HepG2 (cell line): ENCODE measurements at regions of chr9 and their contacts with region 1.

Region 1: DNA sequence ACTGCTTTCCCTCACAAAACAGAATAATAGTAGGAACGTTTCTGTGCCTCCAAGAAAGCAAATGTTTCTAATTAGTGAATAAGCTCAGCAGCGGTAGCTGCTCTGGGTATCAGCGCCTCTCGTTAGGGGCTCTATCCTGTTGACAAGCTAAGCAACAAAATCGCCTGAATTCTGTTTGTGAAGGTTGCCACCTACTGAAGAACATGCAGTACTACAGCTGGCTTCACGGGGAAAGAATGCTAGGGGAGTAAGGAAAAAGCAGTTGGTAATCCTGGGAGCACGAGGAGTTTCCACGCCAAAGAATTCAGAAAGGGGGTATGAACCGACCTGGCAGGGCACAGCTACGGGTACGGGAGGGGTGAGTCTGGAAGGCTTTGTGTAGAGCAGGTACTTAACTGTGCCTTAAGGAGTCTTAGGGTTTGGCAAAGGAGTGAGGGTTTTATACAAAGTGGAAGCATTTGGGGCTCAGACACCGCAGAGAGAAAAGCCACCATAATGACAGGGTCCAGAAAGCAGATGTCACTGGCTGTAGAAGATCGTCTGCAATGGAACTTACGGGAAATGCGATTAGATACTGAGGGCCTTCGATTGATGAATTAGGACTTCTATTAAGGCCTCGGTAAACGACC is 171.7 kb downstream of the TTC39B start:
- DNase-seq: peak; percentile 73
- ATAC-seq: peak; percentile 93
- H3K4me3 ChIP-seq: peak overlapping the region in 2 of 3 experiments; percentile 36 to 60; a peak in 4 of 6 replicates
- H3K27ac ChIP-seq: no peak overlapping the region
- H3K4me1 ChIP-seq: peaks cover 25% of the 10 kb centered on the region; the same call in 1 of the 2 replicates
- H3K27me3 ChIP-seq: peaks cover 0 to 4% of the 10 kb centered on the region in 2 experiments; a peak in 1 of 5 replicates
- CTCF ChIP-seq: peak; percentile 92
- EP300 ChIP-seq: no peak
- POLR2A ChIP-seq: no peak
- RAD21 ChIP-seq: peak; percentile 83

Region 2: GRCh38 chr9:14961372-14962068 is 173.8 kb before region 1 on chr9:
- CTCF ChIA-PET with region 1: no interaction called
- POLR2A ChIA-PET with region 1: interaction called, 3 read pairs
- in situ Hi-C with region 1: no loop called
- intact Hi-C with region 1: loop called (anchors 5 kb)
- DNase-seq: peak; percentile 99
- ATAC-seq: peak; percentile 100
- H3K4me3 ChIP-seq: peak overlapping the region; percentile 58 to 76 (median 72)
- H3K27ac ChIP-seq: peak overlapping the region; percentile 100
- H3K4me1 ChIP-seq: peaks cover 40% of the 10 kb centered on the region
- H3K27me3 ChIP-seq: no peaks in the 10 kb centered on the region; a peak in 1 of 5 replicates
- CTCF ChIP-seq: peak; percentile 50
- EP300 ChIP-seq: no peak; a peak in 1 of 4 replicates
- POLR2A ChIP-seq: peak; percentile 86 to 89
- RAD21 ChIP-seq: no peak; the same call in 1 of the 2 replicates

Region 3: DNA sequence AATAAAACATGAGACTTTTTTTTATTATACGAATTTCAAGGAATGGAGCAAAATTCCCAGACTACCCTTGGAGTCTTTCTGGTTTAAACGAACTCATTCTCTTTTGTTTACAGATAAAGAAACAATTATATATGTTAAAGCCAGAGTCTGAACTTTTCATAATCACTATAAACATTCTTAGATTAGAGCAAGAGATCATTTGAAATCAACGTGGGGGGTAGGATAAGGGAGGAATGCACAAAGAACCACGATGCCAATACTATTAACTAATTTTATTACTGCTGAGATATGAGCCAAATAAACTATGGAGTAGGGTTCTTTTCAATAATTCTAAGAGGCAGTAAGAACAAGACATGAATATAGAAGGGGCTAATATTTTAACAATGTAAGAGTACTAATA is 77.0 kb before region 1 on chr9:
- CTCF ChIA-PET with region 1: no interaction called
- POLR2A ChIA-PET with region 1: no interaction called
- in situ Hi-C with region 1: no loop called
- intact Hi-C with region 1: loop called (anchors 2 kb)
- DNase-seq: no peak
- ATAC-seq: no peak
- H3K4me3 ChIP-seq: no peak overlapping the region
- H3K27ac ChIP-seq: no peak overlapping the region
- H3K4me1 ChIP-seq: no peaks in the 10 kb centered on the region
- H3K27me3 ChIP-seq: peaks cover 0 to 9% of the 10 kb centered on the region in 2 experiments; a peak in 2 of 5 replicates
- CTCF ChIP-seq: no peak
- EP300 ChIP-seq: no peak
- POLR2A ChIP-seq: no peak
- RAD21 ChIP-seq: no peak

Region 4: GRCh38 chr9:15104826-15105420 is 30.4 kb before region 1 on chr9:
- CTCF ChIA-PET with region 1: interaction called, 8 read pairs
- POLR2A ChIA-PET with region 1: no interaction called
- in situ Hi-C with region 1: no loop called
- intact Hi-C with region 1: loop called (anchors 1 kb)
- DNase-seq: peak; percentile 47
- ATAC-seq: peak; percentile 81
- H3K4me3 ChIP-seq: no peak overlapping the region
- H3K27ac ChIP-seq: no peak overlapping the region
- H3K4me1 ChIP-seq: peaks cover 13% of the 10 kb centered on the region
- H3K27me3 ChIP-seq: no peaks in the 10 kb centered on the region
- CTCF ChIP-seq: peak; percentile 81
- EP300 ChIP-seq: no peak
- POLR2A ChIP-seq: no peak
- RAD21 ChIP-seq: no peak; the same call in 1 of the 2 replicates

Region 5: DNA sequence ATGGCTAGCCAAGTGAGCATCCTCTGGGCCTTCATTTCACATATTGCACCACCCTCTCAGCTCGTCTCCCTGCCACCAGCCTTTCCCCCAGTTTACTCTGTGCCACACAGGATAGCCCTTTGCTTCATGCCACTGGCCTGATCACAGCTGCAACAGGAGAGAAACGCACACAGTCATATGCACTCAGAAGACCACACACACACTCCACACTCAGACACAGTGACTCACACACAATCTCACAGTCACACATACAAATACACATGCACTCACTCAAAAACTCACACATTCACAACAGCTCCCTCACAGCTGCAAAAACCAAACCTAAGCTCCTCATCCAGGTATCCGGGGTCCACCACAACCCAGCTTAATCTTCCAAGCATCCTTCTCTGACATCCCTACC is 133.0 kb after region 1 on chr9:
- CTCF ChIA-PET with region 1: no interaction called
- POLR2A ChIA-PET with region 1: no interaction called
- in situ Hi-C with region 1: no loop called
- intact Hi-C with region 1: no loop called
- DNase-seq: no peak
- ATAC-seq: no peak
- H3K4me3 ChIP-seq: no peak overlapping the region
- H3K27ac ChIP-seq: no peak overlapping the region
- H3K4me1 ChIP-seq: no peaks in the 10 kb centered on the region
- H3K27me3 ChIP-seq: no peaks in the 10 kb centered on the region
- CTCF ChIP-seq: no peak
- EP300 ChIP-seq: no peak
- POLR2A ChIP-seq: no peak
- RAD21 ChIP-seq: no peak